Sigmoid colon (tissue), 7 donors: ENCODE measurements at regions of chr17 and their contacts with region 1.

Region 1: GRCh38 chr17:27236717-27237315 is 57.1 kb upstream of the WSB1 start:
- DNase-seq: peak; percentile 87
- H3K4me3 ChIP-seq: no peak overlapping the region
- H3K27ac ChIP-seq: no peak overlapping the region
- H3K4me1 ChIP-seq: peaks cover 0 to under 1% (median 0%) of the 10 kb centered on the region in 4 donors
- H3K27me3 ChIP-seq: no peaks in the 10 kb centered on the region
- CTCF ChIP-seq: peak; percentile 71 to 95 (median 92)
- EP300 ChIP-seq: no peak
- POLR2A ChIP-seq: no peak

Region 2: GRCh38 chr17:27290916-27291598 is 54.2 kb after region 1 on chr17:
- intact Hi-C with region 1: no loop called
- DNase-seq: no peak
- H3K4me3 ChIP-seq: no peak overlapping the region
- H3K27ac ChIP-seq: no peak overlapping the region
- H3K4me1 ChIP-seq: peaks cover 0 to 11% (median 6%) of the 10 kb centered on the region in 4 donors
- H3K27me3 ChIP-seq: no peaks in the 10 kb centered on the region
- CTCF ChIP-seq: no peak
- EP300 ChIP-seq: no peak
- POLR2A ChIP-seq: no peak

Region 3: DNA sequence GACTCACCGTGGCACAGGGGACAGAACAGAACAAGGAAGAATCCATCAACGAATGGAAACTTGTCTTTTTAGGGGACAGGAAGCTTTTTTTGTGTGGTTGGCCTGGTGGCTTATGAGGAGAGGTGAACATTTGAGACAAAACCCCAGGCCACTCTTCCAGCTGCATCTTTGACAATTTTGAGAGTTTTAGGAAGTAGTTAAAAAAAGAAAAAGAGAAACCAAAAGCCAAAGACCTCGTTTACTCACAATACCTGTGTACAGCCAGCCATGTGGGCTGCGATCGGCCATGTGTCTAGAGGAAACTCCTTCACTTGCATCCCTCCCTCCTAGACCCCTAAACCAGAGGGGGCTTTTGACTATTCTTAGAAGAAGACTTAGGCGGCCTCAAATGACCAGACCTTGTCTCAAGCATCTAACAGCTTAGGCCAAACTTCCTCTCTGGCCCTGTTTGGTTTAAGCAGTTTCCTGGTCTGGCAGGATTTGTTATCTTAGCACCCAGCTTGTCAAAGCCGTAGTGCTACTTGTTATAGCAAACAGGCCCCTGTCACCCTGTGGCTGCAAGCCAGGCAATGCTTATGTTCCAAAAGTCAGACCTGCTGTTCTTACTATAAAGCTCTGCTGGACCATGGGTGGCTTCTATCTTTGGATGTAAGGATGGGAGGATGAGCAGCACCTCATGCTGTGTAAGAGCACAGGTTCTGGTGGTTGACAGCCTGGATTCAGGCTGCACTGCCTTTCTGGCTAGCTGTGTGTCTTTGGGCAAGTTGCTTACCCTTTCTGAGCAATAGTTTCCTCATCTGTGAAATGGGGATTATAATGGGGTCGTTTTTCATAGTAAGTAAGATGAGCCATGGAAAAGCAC is 237.2 kb after region 1 on chr17:
- intact Hi-C with region 1: no loop called
- DNase-seq: peak; percentile 75
- H3K4me3 ChIP-seq: no peak overlapping the region
- H3K27ac ChIP-seq: peak overlapping the region in 2 of 4 donors; percentile 14 to 44
- H3K4me1 ChIP-seq: peaks cover 0 to 25% (median 19%) of the 10 kb centered on the region in 4 donors
- H3K27me3 ChIP-seq: no peaks in the 10 kb centered on the region
- CTCF ChIP-seq: no peak
- EP300 ChIP-seq: no peak
- POLR2A ChIP-seq: no peak

Region 4: DNA sequence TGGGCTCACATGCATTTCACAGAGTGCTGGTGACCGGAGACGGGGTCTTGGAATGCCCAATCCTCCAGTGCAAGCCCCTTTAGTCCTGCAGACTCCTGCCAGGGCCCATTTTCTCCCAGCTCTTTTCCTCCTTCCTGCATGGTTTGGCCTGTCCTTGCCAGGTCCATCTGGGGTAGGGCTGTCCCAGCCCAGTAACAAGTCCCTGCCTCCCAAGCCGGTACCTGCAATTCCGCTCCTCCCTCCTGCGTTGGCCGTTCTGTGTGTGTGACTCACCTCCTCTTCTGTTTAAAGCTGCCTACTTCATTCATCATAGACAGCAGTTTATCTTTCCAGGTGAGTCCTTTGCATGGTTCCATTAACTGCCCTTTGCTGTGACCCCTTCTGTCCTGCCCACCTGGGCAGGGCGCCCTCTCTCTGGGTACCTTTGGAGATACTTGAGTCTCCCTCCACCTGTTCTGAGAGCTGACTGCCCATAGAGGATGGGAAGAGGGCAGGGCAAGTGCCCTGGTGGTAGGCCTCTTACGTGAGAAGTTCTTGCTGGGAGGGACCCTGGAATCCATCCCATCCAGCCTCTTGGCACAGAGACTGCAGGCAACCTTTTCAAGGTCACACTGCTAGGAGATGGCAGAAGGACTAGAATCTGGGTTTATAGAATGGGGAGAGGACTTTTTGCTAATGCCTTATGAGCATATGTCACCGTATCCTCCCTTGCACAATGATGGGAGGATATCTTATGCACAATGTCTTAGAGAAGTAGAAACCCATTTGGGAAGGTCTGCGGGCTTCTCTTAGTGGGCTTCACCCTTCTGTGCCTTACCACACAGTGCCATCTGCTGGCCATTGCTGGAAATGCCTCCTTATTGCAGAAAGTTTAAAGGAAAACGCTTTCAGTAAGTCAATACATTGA is 364.5 kb after region 1 on chr17:
- intact Hi-C with region 1: loop called (anchors 1 kb)
- DNase-seq: peak; percentile 87
- H3K4me3 ChIP-seq: no peak overlapping the region
- H3K27ac ChIP-seq: no peak overlapping the region
- H3K4me1 ChIP-seq: peaks cover 0 to 13% (median 3%) of the 10 kb centered on the region in 4 donors
- H3K27me3 ChIP-seq: no peaks in the 10 kb centered on the region
- CTCF ChIP-seq: peak; percentile 85 to 95 (median 86)
- EP300 ChIP-seq: no peak
- POLR2A ChIP-seq: no peak